Activated CD8-positive, alpha-beta T cell treated with anti-CD3 and anti-CD28 coated beads, Interleukin-2, amount 10 ng/mL, durations not matched to agents 7 days and 5 days (primary cell): ENCODE measurements at regions of chr17 and their contacts with region 1.

Region 1: GRCh38 chr17:62109378-62109902 is 44.4 kb upstream of the MED13 start:
- DNase-seq: peak; percentile 79
- ATAC-seq: peak; percentile 100
- H3K4me3 Mint-ChIP-seq: no peak overlapping the region
- H3K27ac Mint-ChIP-seq: no peak overlapping the region
- H3K4me1 Mint-ChIP-seq: no peaks in the 10 kb centered on the region
- H3K27me3 Mint-ChIP-seq: peaks cover 15% of the 10 kb centered on the region

Region 2: GRCh38 chr17:61862975-61863800 is 246.3 kb before region 1 on chr17 and contains the start of gene BRIP1:
- CTCF ChIA-PET with region 1: interaction called, 30 read pairs
- POLR2A ChIA-PET with region 1: interaction called, 8 read pairs
- DNase-seq: peak; percentile 95
- ATAC-seq: peak; percentile 98
- H3K4me3 Mint-ChIP-seq: peak within 1 kb of the TSS; percentile 99
- H3K27ac Mint-ChIP-seq: peak within 1 kb of the TSS; percentile 96
- H3K4me1 Mint-ChIP-seq: peaks cover 34% of the 10 kb centered on the region
- H3K27me3 Mint-ChIP-seq: no peaks in the 10 kb centered on the region
- total RNA-seq, gene BRIP1: 24.3 to 25.9 TPM

Region 3: DNA sequence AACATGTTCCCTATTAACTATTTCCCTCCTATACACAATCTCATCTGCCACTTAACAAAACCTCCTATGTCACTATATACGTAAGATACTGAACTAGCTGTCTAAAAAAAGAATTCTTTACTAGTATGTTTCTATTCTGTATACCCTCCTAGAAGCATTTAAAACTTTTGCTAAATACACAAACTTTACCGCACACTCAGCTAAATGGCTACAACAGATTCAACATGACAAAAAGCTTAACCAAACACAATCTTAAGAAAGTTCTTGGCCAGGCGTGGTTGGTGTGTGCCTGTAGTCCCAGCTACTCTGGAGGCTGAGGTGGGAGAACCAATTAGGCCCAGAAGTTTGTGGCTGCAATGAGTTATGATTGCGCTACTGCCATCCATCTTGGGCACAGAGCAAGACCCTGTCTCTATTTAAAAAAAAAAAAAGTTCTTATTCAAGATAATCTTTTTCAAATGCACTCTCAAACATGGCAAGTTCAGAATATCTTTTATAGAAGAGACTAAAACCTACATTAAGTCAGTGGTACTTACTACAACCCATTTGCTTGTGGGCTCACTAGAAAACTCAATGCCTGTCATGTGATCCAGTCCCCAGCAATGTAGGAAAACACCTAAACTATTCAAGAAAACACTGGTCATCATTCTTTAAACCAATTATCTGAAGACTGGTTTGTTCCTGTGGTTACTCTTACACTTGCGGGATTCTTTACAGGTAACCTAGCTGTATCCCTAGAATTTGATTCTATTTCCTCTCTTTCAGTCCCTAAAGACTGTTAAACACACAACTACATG is 64.1 kb before region 1 on chr17:
- CTCF ChIA-PET with region 1: interaction called, 18 read pairs
- POLR2A ChIA-PET with region 1: no interaction called
- DNase-seq: no peak
- ATAC-seq: no peak
- H3K4me3 Mint-ChIP-seq: no peak overlapping the region
- H3K27ac Mint-ChIP-seq: no peak overlapping the region
- H3K4me1 Mint-ChIP-seq: peaks cover 16% of the 10 kb centered on the region
- H3K27me3 Mint-ChIP-seq: no peaks in the 10 kb centered on the region

Region 4: GRCh38 chr17:62065598-62066468 is 43.6 kb before region 1 on chr17:
- CTCF ChIA-PET with region 1: interaction called, 86 read pairs
- POLR2A ChIA-PET with region 1: interaction called, 7 read pairs
- DNase-seq: peak; percentile 99
- ATAC-seq: peak; percentile 95
- H3K4me3 Mint-ChIP-seq: peak overlapping the region; percentile 93
- H3K27ac Mint-ChIP-seq: peak overlapping the region; percentile 96
- H3K4me1 Mint-ChIP-seq: peaks cover 28% of the 10 kb centered on the region
- H3K27me3 Mint-ChIP-seq: no peaks in the 10 kb centered on the region

Region 5: GRCh38 chr17:62093188-62094155 is 16.0 kb before region 1 on chr17:
- CTCF ChIA-PET with region 1: interaction called, 74 read pairs
- POLR2A ChIA-PET with region 1: no interaction called
- DNase-seq: no peak
- ATAC-seq: no peak
- H3K4me3 Mint-ChIP-seq: no peak overlapping the region
- H3K27ac Mint-ChIP-seq: no peak overlapping the region
- H3K4me1 Mint-ChIP-seq: peaks cover 2% of the 10 kb centered on the region
- H3K27me3 Mint-ChIP-seq: peaks cover 2% of the 10 kb centered on the region

Region 6: DNA sequence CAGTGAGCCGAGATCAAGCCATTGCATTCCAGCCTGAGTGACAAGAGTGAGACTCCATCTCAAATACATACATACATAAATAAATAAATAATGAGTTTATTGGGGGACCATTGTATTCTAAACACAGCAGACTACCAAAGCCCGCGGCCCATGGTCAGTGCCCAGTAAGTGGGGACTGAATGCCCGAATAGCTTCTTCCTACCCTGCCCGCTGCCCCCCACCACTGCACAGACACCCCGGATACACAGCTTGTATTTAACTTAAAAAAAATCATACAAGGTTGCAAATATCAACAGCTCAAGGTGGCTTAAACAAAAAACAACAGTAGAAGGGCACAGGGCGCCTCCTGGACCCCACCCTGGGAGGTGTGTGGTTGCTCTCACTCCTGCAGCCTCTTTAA is 346.6 kb after region 1 on chr17:
- CTCF ChIA-PET with region 1: no interaction called
- POLR2A ChIA-PET with region 1: no interaction called
- DNase-seq: no peak
- ATAC-seq: no peak
- H3K4me3 Mint-ChIP-seq: no peak overlapping the region
- H3K27ac Mint-ChIP-seq: no peak overlapping the region
- H3K4me1 Mint-ChIP-seq: peaks cover 9% of the 10 kb centered on the region
- H3K27me3 Mint-ChIP-seq: no peaks in the 10 kb centered on the region